ENCODE measurements at regions of chr5 and their contacts with region 1.

Region 1: GRCh38 chr5:54021413-54022164 is 288.8 kb downstream of the ARL15 start:
- DNase-seq: no peak
- H3K4me3 ChIP-seq: no peak overlapping the region
- H3K4me3 Mint-ChIP-seq: peak overlapping the region; percentile 42
- H3K27ac Mint-ChIP-seq: peak overlapping the region; percentile 60
- H3K4me1 ChIP-seq: peaks cover 44% of the 10 kb centered on the region
- H3K4me1 Mint-ChIP-seq: peaks cover 39% of the 10 kb centered on the region
- H3K27me3 ChIP-seq: no peaks in the 10 kb centered on the region
- H3K27me3 Mint-ChIP-seq: no peaks in the 10 kb centered on the region
- CTCF ChIP-seq: no peak

Region 2: DNA sequence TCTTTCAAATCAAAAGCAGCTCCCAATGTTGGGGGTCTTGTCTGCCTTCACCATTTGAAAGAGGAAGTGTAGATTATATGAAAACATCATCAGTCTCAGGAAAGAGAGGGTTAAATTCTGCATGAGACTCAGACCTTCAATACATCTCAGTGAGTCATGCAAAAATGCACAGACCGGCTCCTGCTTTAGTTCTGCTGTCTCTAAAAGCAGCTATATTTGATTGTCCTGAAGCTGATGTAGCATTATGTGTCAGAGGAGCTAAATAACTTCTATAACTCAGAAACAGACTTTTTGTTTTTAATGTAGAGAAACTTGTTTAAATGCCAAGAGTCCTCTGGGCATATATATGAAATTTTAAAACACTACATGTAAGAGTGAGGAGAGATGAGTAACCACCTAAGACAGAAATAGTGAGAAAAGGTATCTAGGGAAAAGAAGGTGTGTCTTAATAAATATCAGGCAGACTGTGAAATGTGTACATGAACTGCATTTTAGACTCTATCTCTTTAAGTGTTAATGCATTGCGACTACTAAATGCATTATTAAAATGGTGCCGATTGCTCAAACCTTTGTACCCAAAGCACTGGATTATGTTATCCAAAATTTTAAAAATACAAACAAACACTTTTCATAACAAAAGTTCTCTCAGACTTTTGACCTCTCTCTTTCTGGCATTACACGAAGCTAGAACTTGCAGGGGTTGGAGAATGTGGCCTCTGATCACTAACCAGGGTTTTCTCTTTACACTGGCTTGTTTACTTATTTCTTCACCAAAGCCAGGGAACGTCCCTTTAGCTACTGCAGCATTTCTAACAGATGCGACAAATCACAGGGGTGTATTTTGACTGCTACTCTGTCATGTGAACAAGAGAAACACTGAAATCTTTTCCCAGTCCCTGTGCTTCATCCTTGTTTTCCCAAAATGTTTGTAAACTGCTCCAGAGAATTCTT is 13.5 kb before region 1 on chr5:
- CTCF ChIA-PET with region 1: no interaction called
- POLR2A ChIA-PET with region 1: no interaction called
- intact Hi-C with region 1: loop called (anchors 1 kb)
- DNase-seq: peak in 1 of 2 experiments; percentile 36
- H3K4me3 ChIP-seq: no peak overlapping the region
- H3K4me3 Mint-ChIP-seq: peak overlapping the region; percentile 43
- H3K27ac Mint-ChIP-seq: peak overlapping the region; percentile 66
- H3K4me1 ChIP-seq: peaks cover 23% of the 10 kb centered on the region
- H3K4me1 Mint-ChIP-seq: peaks cover 24% of the 10 kb centered on the region
- H3K27me3 ChIP-seq: no peaks in the 10 kb centered on the region
- H3K27me3 Mint-ChIP-seq: no peaks in the 10 kb centered on the region
- CTCF ChIP-seq: no peak

Measured in Caco-2 (cell line).